GM18951 (cell line): ENCODE measurements at regions of chrX and their contacts with region 1.

Region 1: DNA sequence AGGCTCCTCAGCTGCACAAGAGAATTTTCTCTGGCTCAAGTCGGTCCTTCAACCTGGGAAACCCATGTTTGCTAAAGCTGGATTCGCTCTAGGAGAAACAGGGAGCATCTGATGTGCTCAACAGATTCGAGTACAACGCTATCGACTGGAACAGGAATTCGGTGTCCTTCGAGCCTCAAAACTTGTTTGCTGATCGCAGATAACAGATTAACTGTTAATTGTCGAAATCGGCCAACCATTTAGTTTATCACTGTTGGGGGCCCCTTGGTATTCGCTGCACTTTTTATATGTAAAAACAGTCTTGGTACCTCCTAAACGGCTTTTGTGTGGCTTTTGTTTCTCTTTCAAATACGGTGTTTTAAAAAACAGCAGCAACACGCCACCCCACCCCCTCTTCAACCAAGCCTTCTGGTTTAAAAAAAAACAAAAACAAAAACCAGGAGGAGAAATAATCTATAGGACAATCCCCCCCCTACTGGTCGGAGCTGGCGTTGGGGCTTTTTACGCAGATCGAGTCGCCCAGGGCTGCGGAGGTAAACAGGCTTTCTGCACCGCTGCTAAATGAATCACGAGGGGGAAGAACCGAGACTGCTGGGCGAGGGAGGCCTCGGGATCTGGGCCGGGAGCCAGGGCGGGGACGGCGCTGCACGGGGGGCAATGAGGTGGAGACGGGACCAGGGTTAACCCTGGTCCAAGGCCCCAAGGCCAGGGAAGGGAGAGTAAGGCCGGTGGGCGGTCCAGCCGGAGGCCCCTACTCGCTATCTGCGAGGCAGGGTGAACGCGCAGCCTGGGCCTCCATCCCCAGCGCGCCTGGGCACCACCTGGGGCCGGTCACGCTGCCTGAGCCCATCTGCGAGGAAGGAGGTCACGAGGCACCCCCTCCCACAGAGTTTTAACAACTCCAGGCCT is 71.7 kb upstream of the BCOR start:
- POLR2A ChIP-seq: no peak

Region 2: GRCh38 chrX:40013266-40014195 is 155.9 kb before region 1 on chrX:
- in situ Hi-C with region 1: loop called (anchors 25 kb)
- POLR2A ChIP-seq: peak; percentile 47

Region 3: GRCh38 chrX:40094041-40094899 is 75.2 kb before region 1 on chrX:
- in situ Hi-C with region 1: loop called (anchors 5 kb)
- POLR2A ChIP-seq: no peak

Region 4: DNA sequence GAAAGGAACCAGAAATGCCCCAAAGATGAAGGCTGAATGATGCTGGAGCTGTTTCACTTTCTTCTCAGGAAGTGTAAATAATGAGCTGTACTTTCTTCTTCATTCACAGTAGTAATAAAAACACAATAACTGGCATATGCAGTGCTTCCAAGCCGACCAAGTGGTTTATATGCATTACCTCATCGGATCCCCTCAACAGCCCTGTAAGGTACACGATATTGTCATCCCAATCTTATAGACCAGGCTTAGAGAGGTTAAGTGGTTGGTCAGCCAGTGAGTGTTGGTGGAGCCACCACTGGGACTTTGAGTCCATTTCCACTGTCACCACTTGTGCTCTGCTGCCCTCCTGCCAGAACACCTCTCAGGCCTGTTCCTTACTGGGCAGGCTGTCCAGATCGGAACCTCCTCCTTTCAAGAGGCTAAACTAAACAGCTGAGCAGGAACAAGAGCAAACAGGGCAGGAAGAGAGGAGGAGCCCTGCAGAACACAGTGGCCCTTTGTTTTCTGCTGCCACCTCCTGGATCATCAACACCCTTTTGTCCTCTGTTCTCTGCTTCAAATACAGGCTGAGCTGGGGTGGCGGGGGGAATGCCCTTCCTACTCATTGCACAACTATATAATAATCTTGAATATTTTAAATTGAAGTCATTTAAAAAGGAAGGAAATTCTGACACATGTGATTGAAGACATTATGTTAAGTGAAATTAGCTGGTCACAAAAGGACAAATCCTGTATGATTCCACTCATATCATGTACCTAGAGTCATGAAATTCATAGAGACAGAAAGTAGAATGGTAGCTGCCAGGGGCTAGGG is 298.8 kb after region 1 on chrX:
- in situ Hi-C with region 1: no loop called
- POLR2A ChIP-seq: no peak